Tibial artery (tissue), 4 donors: ENCODE measurements at regions of chr6 and their contacts with region 1.

Region 1: DNA sequence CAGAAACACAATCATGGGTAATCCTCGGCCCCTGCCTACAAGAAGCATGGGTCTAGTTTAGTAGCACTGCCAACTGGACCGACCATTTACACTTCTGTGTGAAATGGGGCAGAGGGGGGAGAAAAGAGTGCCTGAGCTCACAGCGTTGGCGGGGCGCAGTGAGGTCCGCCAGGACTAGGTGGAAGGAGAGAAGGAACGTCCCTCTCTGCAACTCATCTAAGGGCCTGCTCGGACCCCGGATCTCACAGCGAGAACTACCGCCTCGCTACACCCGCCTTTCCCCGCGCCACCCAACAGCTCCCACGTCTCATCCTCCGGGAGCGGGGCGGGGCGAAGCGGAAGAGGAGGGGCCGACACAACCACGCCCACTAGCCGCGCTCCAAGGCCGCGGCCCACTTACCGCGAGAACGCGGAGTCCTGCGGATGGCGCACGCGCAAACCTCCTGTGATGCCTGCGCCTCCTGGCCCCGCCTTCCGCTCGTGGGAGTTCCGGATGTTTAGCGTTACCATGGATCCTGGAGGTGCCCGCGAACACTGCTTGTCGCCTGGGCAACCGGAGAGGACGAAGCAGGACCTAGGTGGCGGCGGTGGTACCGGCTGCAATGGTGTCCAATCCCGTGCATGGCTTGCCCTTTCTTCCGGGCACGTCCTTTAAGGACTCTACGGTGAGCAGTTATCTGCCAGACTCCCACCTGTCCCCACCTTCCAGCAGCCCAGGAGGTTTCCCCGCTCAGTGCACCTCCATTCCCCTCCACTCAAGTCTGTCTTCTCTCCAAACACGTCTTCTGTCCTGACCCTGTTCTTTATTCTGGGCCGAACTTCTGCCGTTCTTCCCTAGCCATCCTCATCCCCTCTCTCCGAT is at the start of gene EFHC1:
- DNase-seq: peak; percentile 98 to 99
- H3K4me3 ChIP-seq: peak within 1 kb of the TSS; percentile 65 to 84
- H3K27ac ChIP-seq: peak within 1 kb of the TSS; percentile 84
- H3K4me1 ChIP-seq: peaks cover 0 to 33% (median 18%) of the 10 kb centered on the region in 4 donors
- H3K27me3 ChIP-seq: no peaks in the 10 kb centered on the region
- CTCF ChIP-seq: peak in 1 of 2 experiments; percentile 4

Region 2: DNA sequence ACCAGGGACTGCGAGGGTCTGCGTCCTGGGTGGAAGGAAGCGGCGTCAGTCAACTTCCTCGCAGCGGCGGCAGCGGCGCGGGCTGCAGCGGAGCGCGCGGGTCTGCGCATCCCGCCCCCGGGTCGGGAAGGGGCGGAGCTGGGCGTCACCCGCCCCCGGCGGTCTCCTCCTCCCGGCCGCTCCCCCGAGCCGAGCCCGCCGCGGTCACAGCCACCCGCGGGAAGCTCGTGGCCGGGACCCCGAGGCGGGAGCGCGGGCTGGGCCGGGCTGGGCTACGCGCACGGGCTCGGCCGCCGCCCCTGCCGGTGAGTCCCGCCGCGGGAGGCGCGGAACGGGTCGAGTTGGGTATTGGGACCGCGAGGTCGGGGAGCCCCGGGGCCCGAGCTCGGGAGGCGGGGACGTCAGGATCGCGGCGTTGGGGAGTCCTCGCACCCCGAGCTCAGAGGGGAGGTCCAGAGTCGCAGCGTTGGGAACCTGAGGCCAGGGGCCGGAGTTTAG is 58.0 kb before region 1 on chr6 and contains the start of gene PAQR8:
- intact Hi-C with region 1: loop called (anchors 5 kb)
- DNase-seq: peak; percentile 52 to 86
- H3K4me3 ChIP-seq: peak within 1 kb of the TSS; percentile 77
- H3K27ac ChIP-seq: peak within 1 kb of the TSS; percentile 61 to 64
- H3K4me1 ChIP-seq: peaks cover 0 to 12% (median 5%) of the 10 kb centered on the region in 4 donors
- H3K27me3 ChIP-seq: no peaks in the 10 kb centered on the region
- CTCF ChIP-seq: no peak

Region 3: GRCh38 chr6:52503848-52504781 is 84.1 kb after region 1 on chr6:
- intact Hi-C with region 1: loop called (anchors 2 kb)
- DNase-seq: peak; percentile 92 to 98
- H3K4me3 ChIP-seq: peak overlapping the region in 1 of 2 donors; percentile 4
- H3K27ac ChIP-seq: peak overlapping the region; percentile 68 to 84
- H3K4me1 ChIP-seq: peaks cover 4 to 62% (median 52%) of the 10 kb centered on the region in 4 donors
- H3K27me3 ChIP-seq: no peaks in the 10 kb centered on the region
- CTCF ChIP-seq: peak in 1 of 2 experiments; percentile 8

Region 4: DNA sequence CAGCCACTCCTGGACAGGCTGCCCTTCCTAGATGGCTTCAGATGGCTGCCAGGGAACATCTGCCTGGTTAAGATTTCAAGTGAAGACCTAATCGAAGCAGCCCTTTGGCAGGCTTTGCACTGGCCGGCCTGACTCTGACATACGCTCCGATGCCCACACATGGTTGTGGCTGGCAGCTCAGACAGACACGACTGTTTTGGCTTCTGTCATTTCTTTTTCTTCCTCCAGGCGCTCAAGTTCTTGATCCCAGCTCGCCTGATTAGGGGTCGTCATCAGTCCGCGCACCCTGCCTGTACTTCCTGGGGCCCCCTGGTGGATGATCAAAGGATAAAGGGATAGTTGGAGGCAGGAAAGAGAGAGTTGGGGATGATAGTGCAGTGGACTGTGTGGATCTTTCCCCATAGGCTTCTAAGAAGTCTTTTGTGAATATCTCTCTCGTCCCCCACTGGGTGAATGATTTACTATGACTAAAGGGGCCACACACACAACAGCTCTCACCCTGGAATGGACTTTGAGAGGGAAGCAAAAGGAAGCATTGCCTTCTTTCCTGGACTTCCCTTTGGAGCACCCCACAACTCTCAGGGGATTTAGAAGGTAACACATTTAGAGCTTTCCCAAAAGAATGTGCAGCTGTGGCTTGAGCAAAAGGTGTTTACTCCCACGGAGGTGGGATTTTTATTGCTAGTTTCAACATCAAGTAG is 178.2 kb after region 1 on chr6:
- intact Hi-C with region 1: loop called (anchors 5 kb)
- DNase-seq: peak; percentile 66 to 76
- H3K4me3 ChIP-seq: peak overlapping the region in 1 of 2 donors; percentile 23
- H3K27ac ChIP-seq: peak overlapping the region; percentile 80 to 85
- H3K4me1 ChIP-seq: peaks cover 0 to 49% (median 37%) of the 10 kb centered on the region in 4 donors
- H3K27me3 ChIP-seq: no peaks in the 10 kb centered on the region
- CTCF ChIP-seq: peak; percentile 73 to 82